Calu3 (cell line): ENCODE measurements at regions of chr4 and their contacts with region 1.

Region 1: GRCh38 chr4:142405021-142405694 is 440.9 kb downstream of the INPP4B start:
- DNase-seq: peak; percentile 15
- H3K4me3 Mint-ChIP-seq: peak overlapping the region; percentile 72
- H3K27ac Mint-ChIP-seq: peak overlapping the region; percentile 95
- H3K4me1 Mint-ChIP-seq: peaks cover 36% of the 10 kb centered on the region
- H3K27me3 Mint-ChIP-seq: no peaks in the 10 kb centered on the region
- CTCF ChIP-seq: no peak

Region 2: DNA sequence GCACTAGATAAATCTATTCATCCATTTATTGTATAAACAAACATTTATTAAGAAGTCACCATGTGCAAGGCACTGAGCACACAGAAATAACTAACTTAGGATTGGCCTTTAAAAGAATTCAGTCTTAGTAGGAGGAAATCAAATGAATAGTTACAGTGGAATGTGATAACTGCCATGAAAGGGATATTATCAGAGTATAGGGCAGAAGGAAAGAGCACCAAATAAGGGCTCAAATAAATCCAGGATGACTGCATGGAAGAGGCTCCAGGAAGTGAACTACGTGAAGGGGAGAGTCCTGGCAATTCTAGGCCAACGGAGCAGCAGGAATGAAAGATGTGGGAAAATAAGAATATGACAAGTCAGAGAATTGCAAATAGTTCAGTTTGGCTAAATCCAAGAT is 34.9 kb after region 1 on chr4:
- CTCF ChIA-PET with region 1: interaction called, 3 read pairs
- intact Hi-C with region 1: loop called (anchors 2 kb)
- DNase-seq: peak; percentile 40
- H3K4me3 Mint-ChIP-seq: peak overlapping the region; percentile 53
- H3K27ac Mint-ChIP-seq: peak overlapping the region; percentile 100
- H3K4me1 Mint-ChIP-seq: peaks cover 76% of the 10 kb centered on the region
- H3K27me3 Mint-ChIP-seq: no peaks in the 10 kb centered on the region
- CTCF ChIP-seq: no peak